PC-3 (cell line): ENCODE measurements at regions of chr12 and their contacts with region 1.

Region 1: GRCh38 chr12:6867413-6868210 is at the start of gene TPI1:
- DNase-seq: peak; percentile 67
- ATAC-seq: peak; percentile 57
- H3K4me3 ChIP-seq: peak within 1 kb of the TSS; percentile 97
- H3K27ac ChIP-seq: peak within 1 kb of the TSS; percentile 56
- H3K4me1 ChIP-seq: peaks cover 38% of the 10 kb centered on the region
- H3K27me3 ChIP-seq: no peaks in the 10 kb centered on the region
- CTCF ChIP-seq: no peak
- total RNA-seq, gene TPI1: 1,259 and 1,708 TPM in 2 replicates

Region 2: GRCh38 chr12:6635856-6636531 is 231.6 kb before region 1 on chr12 and contains the start of gene LPAR5:
- CTCF ChIA-PET with region 1: no interaction called
- POLR2A ChIA-PET with region 1: interaction called, 16 read pairs
- intact Hi-C with region 1: no loop called
- DNase-seq: peak; percentile 67
- ATAC-seq: peak; percentile 89
- H3K4me3 ChIP-seq: peak within 1 kb of the TSS; percentile 61
- H3K27ac ChIP-seq: peak within 1 kb of the TSS; percentile 58
- H3K4me1 ChIP-seq: peaks cover 16% of the 10 kb centered on the region
- H3K27me3 ChIP-seq: no peaks in the 10 kb centered on the region
- CTCF ChIP-seq: no peak
- total RNA-seq, gene LPAR5: 2.3 and 4.3 TPM in 2 replicates

Region 3: DNA sequence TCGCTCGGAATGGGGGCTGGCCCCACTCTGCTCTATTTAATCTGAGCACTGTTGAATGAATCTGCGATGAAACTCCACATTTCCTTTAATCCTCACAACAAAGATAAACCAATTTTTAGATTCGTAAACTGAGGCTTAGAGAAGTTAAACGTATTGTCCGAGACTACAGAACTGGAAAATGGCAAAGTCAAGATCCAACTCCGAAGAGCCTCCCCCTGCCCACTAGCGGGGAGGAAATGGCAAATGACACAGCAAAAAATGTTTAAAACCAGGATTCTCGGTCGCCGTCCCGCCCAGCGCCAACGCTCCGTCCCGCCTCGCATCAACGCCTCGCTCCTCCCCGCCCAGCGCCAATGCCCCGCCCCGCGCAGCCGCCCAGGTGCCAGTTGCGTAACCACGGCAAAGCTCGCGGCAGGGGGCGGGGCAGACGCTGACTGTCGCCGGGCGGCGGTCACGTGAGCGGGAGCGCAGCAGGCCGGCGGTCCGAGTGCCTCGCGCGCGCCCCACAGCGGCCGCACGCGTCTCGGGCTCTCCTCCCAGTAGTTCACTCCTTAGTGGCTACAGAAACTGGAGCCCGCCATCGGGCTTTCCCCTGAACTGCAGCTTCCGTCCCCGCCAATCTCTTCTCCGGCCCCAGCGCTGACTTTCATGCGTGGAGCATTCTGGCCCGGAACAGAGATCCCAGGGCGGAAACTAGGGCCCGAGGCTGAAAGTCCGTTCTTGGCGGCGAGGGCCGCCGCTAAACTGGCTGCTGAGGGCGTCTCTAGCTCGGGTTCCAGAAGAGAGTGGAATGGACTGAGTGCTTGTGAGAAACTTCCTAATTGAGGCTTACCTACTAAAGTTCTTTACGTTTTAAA is 23.4 kb after region 1 on chr12:
- CTCF ChIA-PET with region 1: interaction called, 16 read pairs
- POLR2A ChIA-PET with region 1: interaction called, 10 read pairs
- intact Hi-C with region 1: no loop called
- DNase-seq: peak; percentile 93
- ATAC-seq: peak; percentile 98
- H3K4me3 ChIP-seq: peak overlapping the region; percentile 65
- H3K27ac ChIP-seq: peak overlapping the region; percentile 91
- H3K4me1 ChIP-seq: peaks cover 11% of the 10 kb centered on the region
- H3K27me3 ChIP-seq: no peaks in the 10 kb centered on the region
- CTCF ChIP-seq: peak; percentile 60

Region 4: DNA sequence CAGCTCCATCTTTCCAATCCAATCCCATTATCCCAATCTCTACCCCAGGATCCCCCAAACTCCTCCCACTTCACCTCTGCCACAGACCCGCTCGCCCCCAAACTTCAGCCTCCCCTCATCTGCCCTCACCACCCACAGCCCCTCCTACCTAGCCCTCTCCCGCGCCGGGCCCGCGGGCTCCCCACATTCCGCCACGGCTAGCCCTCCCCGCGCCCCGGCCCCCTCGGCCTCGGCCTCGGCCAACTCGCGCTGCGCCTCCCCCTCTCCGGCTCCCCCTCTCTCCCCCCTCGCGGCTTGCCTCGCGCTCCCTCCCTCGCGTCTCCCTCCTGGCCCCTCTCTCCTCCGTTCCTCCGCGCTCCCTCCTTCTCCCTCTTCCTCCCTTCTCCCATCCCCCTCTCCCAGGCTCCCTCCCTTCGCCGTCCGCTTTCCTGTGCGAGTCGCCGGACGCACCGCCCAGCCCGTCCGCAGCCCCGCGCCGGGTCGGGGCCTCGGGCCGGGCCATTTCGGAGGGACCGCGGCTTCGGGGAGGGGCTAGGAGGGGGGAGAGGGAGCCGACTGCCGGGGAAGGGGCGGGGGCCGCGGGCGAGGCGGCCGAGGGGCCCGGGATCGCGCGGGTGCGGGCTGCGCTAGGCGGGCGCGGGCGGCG is 59.9 kb after region 1 on chr12 and contains the start of gene ATN1:
- CTCF ChIA-PET with region 1: interaction called, 4 read pairs
- POLR2A ChIA-PET with region 1: interaction called, 3 read pairs
- intact Hi-C with region 1: loop called (anchors 5 kb)
- DNase-seq: peak; percentile 53
- ATAC-seq: peak; percentile 26
- H3K4me3 ChIP-seq: peak within 1 kb of the TSS; percentile 93
- H3K27ac ChIP-seq: no peak within 1 kb of the TSS
- H3K4me1 ChIP-seq: peaks cover 43% of the 10 kb centered on the region
- H3K27me3 ChIP-seq: no peaks in the 10 kb centered on the region
- CTCF ChIP-seq: no peak
- total RNA-seq, gene ATN1: 11.6 and 41.5 TPM in 2 replicates

Region 5: GRCh38 chr12:7047306-7047705 is 179.7 kb after region 1 on chr12:
- CTCF ChIA-PET with region 1: no interaction called
- POLR2A ChIA-PET with region 1: no interaction called
- intact Hi-C with region 1: no loop called
- DNase-seq: no peak
- ATAC-seq: no peak
- H3K4me3 ChIP-seq: no peak overlapping the region
- H3K27ac ChIP-seq: no peak overlapping the region
- H3K4me1 ChIP-seq: no peaks in the 10 kb centered on the region
- H3K27me3 ChIP-seq: peaks cover 1% of the 10 kb centered on the region; the same call in 1 of the 2 replicates
- CTCF ChIP-seq: no peak